B cell (primary cell): ENCODE measurements at regions of chr16 and their contacts with region 1.

Region 1: GRCh38 chr16:68264128-68265077 is at the start of gene SLC7A6:
- DNase-seq: peak; percentile 89
- ATAC-seq: peak; percentile 74
- H3K4me3 ChIP-seq: peak within 1 kb of the TSS; percentile 63 to 91 (median 86)
- H3K4me3 Mint-ChIP-seq: peak within 1 kb of the TSS; percentile 99
- H3K27ac ChIP-seq: peak within 1 kb of the TSS; percentile 92 to 97
- H3K27ac Mint-ChIP-seq: peak within 1 kb of the TSS; percentile 99
- H3K4me1 ChIP-seq: peaks cover 20 to 45% of the 10 kb centered on the region in 2 donors
- H3K4me1 Mint-ChIP-seq: peaks cover 43% of the 10 kb centered on the region
- H3K27me3 ChIP-seq: no peaks in the 10 kb centered on the region
- H3K27me3 Mint-ChIP-seq: no peaks in the 10 kb centered on the region
- CTCF ChIP-seq: peak; percentile 79
- total RNA-seq, gene SLC7A6: 70.5 and 73.8 TPM in 2 replicates

Region 2: DNA sequence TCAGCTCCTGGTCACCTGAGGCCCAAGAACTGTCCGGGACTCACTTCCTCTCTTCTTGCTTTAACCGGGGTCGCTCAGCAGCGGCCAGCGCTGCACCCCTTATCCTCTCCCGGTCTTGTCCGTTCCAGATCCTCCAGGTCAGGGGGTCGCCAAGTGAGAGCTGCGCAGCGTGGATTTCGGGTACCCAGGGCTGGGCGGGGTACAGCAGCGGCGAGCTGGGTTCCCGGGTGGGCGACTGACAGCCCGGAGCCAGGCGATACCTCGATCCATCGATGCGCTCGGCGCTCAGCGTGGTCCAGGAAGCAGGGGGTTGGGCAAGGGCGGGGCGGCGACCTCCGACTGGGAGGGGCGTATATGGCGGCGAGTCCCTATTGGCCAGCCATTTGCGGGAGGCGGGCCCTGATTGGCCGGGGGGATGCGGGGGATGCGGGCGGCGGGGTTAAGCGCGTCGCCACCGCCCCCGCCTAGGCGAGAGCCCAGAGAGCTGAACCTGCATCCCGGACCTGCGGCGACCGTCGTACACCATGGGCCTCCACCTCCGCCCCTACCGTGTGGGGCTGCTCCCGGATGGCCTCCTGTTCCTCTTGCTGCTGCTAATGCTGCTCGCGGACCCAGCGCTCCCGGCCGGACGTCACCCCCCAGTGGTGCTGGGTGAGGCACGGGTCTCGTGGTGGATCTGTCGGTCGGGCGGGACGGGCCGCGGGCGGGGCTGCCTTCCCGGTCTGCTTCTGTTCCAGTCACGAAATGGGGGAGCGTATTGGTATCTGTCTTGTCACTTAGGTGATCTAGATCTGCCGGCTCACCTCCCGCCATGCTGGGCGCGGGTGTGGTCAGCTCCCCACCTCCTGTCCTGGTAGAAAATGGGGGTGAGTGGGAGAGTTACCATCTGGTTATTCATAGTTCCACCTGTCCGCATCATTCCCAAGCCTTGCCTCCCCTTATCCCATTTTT is 19.2 kb before region 1 on chr16 and contains the start of gene PLA2G15:
- CTCF ChIA-PET with region 1: interaction called, 65 read pairs
- POLR2A ChIA-PET with region 1: interaction called, 3 read pairs
- intact Hi-C with region 1: loop called (anchors 1 kb)
- DNase-seq: peak; percentile 97
- ATAC-seq: peak; percentile 98
- H3K4me3 ChIP-seq: peak within 1 kb of the TSS; percentile 78 to 97 (median 96)
- H3K4me3 Mint-ChIP-seq: peak within 1 kb of the TSS; percentile 97
- H3K27ac ChIP-seq: peak within 1 kb of the TSS; percentile 12 to 28
- H3K27ac Mint-ChIP-seq: peak within 1 kb of the TSS; percentile 50
- H3K4me1 ChIP-seq: peaks cover 25 to 33% of the 10 kb centered on the region in 2 donors
- H3K4me1 Mint-ChIP-seq: peaks cover 32% of the 10 kb centered on the region
- H3K27me3 ChIP-seq: no peaks in the 10 kb centered on the region
- H3K27me3 Mint-ChIP-seq: no peaks in the 10 kb centered on the region
- CTCF ChIP-seq: no peak
- total RNA-seq, gene PLA2G15: 10.8 and 12.5 TPM in 2 replicates

Region 3: GRCh38 chr16:68275611-68276191 is 11.3 kb after region 1 on chr16:
- CTCF ChIA-PET with region 1: interaction called, 20 read pairs
- POLR2A ChIA-PET with region 1: interaction called, 4 read pairs
- intact Hi-C with region 1: loop called (anchors 1 kb)
- DNase-seq: peak; percentile 65
- ATAC-seq: peak; percentile 67
- H3K4me3 ChIP-seq: peak overlapping the region in 2 of 5 experiments; percentile 24 to 40
- H3K4me3 Mint-ChIP-seq: peak overlapping the region; percentile 64
- H3K27ac ChIP-seq: peak overlapping the region; percentile 46 to 79
- H3K27ac Mint-ChIP-seq: peak overlapping the region; percentile 94
- H3K4me1 ChIP-seq: peaks cover 43 to 61% of the 10 kb centered on the region in 2 donors
- H3K4me1 Mint-ChIP-seq: peaks cover 55% of the 10 kb centered on the region
- H3K27me3 ChIP-seq: no peaks in the 10 kb centered on the region
- H3K27me3 Mint-ChIP-seq: no peaks in the 10 kb centered on the region
- CTCF ChIP-seq: no peak

Region 4: GRCh38 chr16:68289621-68290329 is 25.4 kb after region 1 on chr16:
- CTCF ChIA-PET with region 1: interaction called, 289 read pairs
- POLR2A ChIA-PET with region 1: interaction called, 38 read pairs
- intact Hi-C with region 1: loop called (anchors 1 kb)
- DNase-seq: peak; percentile 83
- ATAC-seq: peak; percentile 83
- H3K4me3 ChIP-seq: peak overlapping the region in 1 of 5 experiments; percentile 4
- H3K4me3 Mint-ChIP-seq: peak overlapping the region; percentile 58
- H3K27ac ChIP-seq: peak overlapping the region; percentile 62 to 92
- H3K27ac Mint-ChIP-seq: peak overlapping the region; percentile 93
- H3K4me1 ChIP-seq: peaks cover 55 to 75% of the 10 kb centered on the region in 2 donors
- H3K4me1 Mint-ChIP-seq: peaks cover 61% of the 10 kb centered on the region
- H3K27me3 ChIP-seq: no peaks in the 10 kb centered on the region
- H3K27me3 Mint-ChIP-seq: no peaks in the 10 kb centered on the region
- CTCF ChIP-seq: no peak

Region 5: DNA sequence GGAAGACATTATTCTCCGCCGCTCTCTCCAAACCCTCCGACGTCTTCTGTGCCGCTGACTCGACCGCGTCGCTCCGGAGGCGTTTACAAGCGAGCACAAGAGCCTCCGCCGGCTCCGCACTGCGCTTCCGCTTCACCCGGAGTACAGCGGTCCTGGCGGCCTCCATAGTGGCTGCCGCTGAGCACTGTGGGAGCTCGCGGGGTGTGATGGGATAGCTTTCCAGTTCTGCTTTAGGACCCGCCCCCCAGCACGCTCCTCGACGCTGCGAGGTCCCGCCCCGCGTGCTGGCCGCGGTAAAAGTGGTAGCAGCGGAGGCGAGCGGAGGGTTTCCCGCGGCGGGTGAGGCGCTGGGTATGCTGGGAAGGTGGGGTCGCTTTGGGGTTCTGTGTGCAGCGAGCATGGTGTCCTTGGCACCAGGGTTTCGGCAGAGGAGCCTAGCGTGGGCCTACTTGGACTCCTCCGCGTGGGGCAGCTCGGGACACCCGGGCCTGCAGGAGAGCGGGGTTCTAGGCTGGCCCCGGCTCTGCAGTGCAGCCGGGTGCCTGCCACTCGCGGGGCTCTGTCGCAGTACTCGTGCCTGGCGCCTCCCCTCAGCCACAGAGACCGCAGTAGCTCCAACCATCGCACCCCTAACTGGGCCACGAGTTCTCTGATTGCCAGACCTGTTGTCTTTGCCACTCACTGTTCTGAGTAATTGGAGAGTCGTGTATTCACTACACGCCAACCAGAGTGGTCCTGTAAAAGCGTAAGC is 46.5 kb after region 1 on chr16 and contains the starts of genes PRMT7 and SLC7A6OS:
- CTCF ChIA-PET with region 1: interaction called, 185 read pairs
- POLR2A ChIA-PET with region 1: interaction called, 20 read pairs
- intact Hi-C with region 1: loop called (anchors 1 kb)
- DNase-seq: peak; percentile 94
- ATAC-seq: peak; percentile 99
- H3K4me3 ChIP-seq: peak within 1 kb of the TSS; percentile 76 to 96 (median 94)
- H3K4me3 Mint-ChIP-seq: peak within 1 kb of the TSS; percentile 98
- H3K27ac ChIP-seq: peak within 1 kb of the TSS; percentile 59 to 76
- H3K27ac Mint-ChIP-seq: peak within 1 kb of the TSS; percentile 96
- H3K4me1 ChIP-seq: peaks cover 20 to 24% of the 10 kb centered on the region in 2 donors
- H3K4me1 Mint-ChIP-seq: peaks cover 37% of the 10 kb centered on the region
- H3K27me3 ChIP-seq: no peaks in the 10 kb centered on the region
- H3K27me3 Mint-ChIP-seq: no peaks in the 10 kb centered on the region
- CTCF ChIP-seq: peak; percentile 36
- total RNA-seq, gene PRMT7: 76.9 and 79.0 TPM in 2 replicates
- total RNA-seq, gene SLC7A6OS: 52.0 and 54.1 TPM in 2 replicates

Region 6: DNA sequence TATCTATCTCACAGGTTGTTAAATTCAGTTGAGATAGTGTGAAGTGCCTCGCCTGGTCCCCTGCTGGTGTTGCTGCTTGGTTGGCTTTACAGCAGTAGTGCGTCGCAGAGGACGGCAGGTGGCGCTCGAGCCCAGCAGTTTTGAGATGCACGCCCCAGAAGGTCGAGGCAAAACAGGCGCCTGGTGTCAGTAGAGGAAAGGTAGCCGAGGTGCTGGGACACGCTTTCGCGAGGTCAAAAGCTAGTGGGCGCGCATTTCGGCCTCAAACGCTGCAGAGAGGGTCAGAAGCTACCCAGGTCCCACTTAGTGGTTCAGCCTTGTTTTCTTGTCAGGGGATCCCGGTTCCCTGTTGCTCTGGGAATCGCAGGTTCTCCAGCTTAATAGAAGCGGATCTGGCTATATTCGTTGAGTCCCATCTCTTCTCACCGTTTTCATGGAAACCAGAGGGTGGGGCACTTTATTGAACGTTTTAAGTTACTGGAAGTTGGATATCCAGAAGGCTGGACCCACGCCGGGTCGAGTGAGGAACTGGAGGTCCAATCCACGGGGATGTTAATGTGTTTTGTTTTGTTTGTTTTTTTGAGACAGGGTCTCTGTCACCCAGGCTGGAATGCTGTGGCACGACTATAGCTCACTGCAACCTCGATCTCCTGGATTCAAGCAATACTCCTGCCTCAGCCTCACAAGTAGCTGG is 264.4 kb after region 1 on chr16:
- CTCF ChIA-PET with region 1: interaction called, 5 read pairs
- POLR2A ChIA-PET with region 1: no interaction called
- intact Hi-C with region 1: loop called (anchors 10 kb)
- DNase-seq: peak; percentile 93
- ATAC-seq: peak; percentile 81
- H3K4me3 ChIP-seq: no peak overlapping the region
- H3K4me3 Mint-ChIP-seq: peak overlapping the region; percentile 90
- H3K27ac ChIP-seq: no peak overlapping the region
- H3K27ac Mint-ChIP-seq: peak overlapping the region; percentile 83
- H3K4me1 ChIP-seq: peaks cover 16 to 22% of the 10 kb centered on the region in 2 donors
- H3K4me1 Mint-ChIP-seq: peaks cover 17% of the 10 kb centered on the region
- H3K27me3 ChIP-seq: no peaks in the 10 kb centered on the region
- H3K27me3 Mint-ChIP-seq: no peaks in the 10 kb centered on the region
- CTCF ChIP-seq: peak; percentile 94